Naive thymus-derived CD4-positive, alpha-beta T cell (primary cell): ENCODE measurements at regions of chr4 and their contacts with region 1.

Region 1: DNA sequence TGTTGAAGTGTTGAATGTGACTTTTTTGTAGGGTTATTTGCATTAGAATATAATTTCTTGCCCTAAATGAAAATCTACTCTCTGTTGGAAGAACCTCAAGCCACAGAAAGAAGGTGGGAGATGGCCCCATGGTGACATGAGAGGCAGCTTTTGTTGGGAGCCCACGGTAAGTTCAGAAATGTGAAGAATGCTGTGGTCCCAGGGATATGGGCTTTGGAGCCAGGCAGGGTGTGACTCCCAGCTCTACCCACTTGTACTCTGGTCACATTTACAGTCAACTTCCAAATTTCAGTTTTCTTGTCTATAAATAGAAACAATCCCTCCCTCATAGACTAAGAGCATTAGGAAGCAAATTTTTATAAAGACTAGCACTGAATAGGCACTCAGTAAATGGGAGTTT is 177.8 kb downstream of the RAB28 start:
- DNase-seq: no peak
- ATAC-seq: no peak
- H3K4me3 ChIP-seq: no peak overlapping the region
- H3K4me3 Mint-ChIP-seq: no peak overlapping the region
- H3K27ac ChIP-seq: no peak overlapping the region
- H3K27ac Mint-ChIP-seq: no peak overlapping the region
- H3K4me1 ChIP-seq: no peaks in the 10 kb centered on the region
- H3K4me1 Mint-ChIP-seq: no peaks in the 10 kb centered on the region
- H3K27me3 ChIP-seq: no peaks in the 10 kb centered on the region
- H3K27me3 Mint-ChIP-seq: no peaks in the 10 kb centered on the region

Region 2: DNA sequence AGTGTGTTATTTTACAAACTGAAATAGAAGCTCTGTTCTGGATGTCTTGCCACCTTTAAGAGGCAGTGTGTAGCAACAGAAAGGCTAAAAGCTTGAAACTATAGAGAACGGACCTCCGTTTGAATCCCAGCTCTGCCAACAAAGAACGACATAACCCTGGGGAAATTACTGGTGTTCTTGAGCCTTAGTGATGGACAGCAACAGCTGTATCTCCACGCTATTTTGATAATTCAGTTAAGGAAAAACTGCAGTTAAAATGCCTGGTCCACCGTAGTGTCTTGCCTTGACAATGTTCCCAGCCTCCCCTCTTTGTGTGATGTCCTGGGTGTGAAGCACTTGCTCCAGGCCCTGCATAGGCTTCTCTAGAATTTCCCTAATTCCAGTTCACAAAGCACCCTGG is 1620.9 kb before region 1 on chr4:
- CTCF ChIA-PET with region 1: no interaction called
- POLR2A ChIA-PET with region 1: no interaction called
- intact Hi-C with region 1: no loop called
- DNase-seq: no peak
- ATAC-seq: no peak
- H3K4me3 ChIP-seq: no peak overlapping the region
- H3K4me3 Mint-ChIP-seq: no peak overlapping the region
- H3K27ac ChIP-seq: no peak overlapping the region
- H3K27ac Mint-ChIP-seq: no peak overlapping the region
- H3K4me1 ChIP-seq: no peaks in the 10 kb centered on the region
- H3K4me1 Mint-ChIP-seq: no peaks in the 10 kb centered on the region
- H3K27me3 ChIP-seq: no peaks in the 10 kb centered on the region
- H3K27me3 Mint-ChIP-seq: peaks cover 0 to 18% (median 9%) of the 10 kb centered on the region in 5 donors

Region 3: DNA sequence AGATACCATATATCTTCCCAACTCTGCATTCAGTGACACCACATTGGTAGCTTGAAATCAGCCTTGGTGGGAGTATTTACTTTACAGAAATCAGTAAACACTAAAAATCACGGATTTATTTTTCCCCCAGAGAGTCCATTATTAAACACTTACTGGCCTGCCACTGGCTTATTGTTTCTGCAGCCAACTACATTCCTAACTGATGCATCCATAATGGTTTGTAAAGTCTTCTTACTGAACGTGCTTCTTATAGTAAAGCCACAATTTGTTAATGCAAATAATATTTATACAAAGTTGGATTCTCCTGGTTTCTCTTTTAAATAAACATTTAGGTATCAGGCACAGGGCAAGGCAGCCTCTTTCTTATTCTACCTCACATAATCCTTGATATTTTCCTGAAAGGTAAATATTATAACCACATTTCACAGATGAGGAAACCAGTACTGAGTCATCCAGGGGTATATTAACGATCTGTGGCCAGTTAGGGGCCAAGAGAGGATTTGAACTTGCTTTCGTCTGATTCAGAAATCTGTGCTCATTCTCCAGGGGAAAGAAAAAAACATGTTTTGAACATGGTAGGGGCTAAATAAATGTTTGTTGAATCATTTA is 41.3 kb after region 1 on chr4:
- CTCF ChIA-PET with region 1: no interaction called
- POLR2A ChIA-PET with region 1: no interaction called
- intact Hi-C with region 1: loop called in 1 of 2 experiments (anchors 2 kb)
- DNase-seq: no peak
- ATAC-seq: no peak
- H3K4me3 ChIP-seq: no peak overlapping the region
- H3K4me3 Mint-ChIP-seq: no peak overlapping the region
- H3K27ac ChIP-seq: no peak overlapping the region
- H3K27ac Mint-ChIP-seq: no peak overlapping the region
- H3K4me1 ChIP-seq: no peaks in the 10 kb centered on the region
- H3K4me1 Mint-ChIP-seq: no peaks in the 10 kb centered on the region
- H3K27me3 ChIP-seq: no peaks in the 10 kb centered on the region
- H3K27me3 Mint-ChIP-seq: no peaks in the 10 kb centered on the region